IMR-90 (cell line): ENCODE measurements at regions of chr3 and their contacts with region 1.

Region 1: DNA sequence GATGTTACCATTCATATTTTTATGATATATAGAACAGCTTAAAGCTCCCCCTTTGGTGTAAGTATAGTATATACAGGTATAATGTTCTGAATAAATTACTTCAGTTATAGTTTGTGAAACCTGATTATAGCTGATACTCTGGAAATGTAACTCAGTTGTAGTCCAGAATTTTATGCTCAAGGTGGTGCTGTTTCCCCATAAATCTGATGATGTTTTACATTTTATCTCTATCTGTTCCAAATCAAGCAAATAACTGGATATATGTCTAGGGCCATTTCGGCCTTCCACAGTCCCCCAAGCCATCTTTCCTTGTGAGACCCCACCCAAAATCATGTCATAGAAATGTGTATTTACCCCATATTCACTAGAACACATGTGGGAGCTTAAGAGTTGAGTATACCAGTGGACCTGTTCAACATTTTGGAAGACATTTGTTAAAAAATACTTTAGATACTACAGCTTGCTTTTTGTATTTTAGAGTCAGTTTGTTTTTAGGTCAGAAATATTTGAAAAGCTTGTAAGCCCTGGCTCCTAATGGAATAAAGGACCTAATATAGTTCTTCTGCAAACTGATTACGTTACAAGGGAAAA is 107.1 kb downstream of the ATG7 start:
- DNase-seq: peak; percentile 70
- ATAC-seq: peak; percentile 86
- H3K4me3 ChIP-seq: no peak overlapping the region
- H3K27ac ChIP-seq: no peak overlapping the region
- H3K4me1 ChIP-seq: peaks cover 8% of the 10 kb centered on the region
- H3K27me3 ChIP-seq: no peaks in the 10 kb centered on the region
- CTCF ChIP-seq: peak; percentile 74
- POLR2A ChIP-seq: 0 out of 2 replicates have a peak, but pooled peaks have one; percentile 42
- RAD21 ChIP-seq: peak; percentile 83

Region 2: GRCh38 chr3:11548721-11549131 is 169.4 kb after region 1 on chr3:
- CTCF ChIA-PET with region 1: no interaction called
- POLR2A ChIA-PET with region 1: interaction called, 6 read pairs
- dilution Hi-C with region 1: no loop called
- in situ Hi-C with region 1: no loop called
- intact Hi-C with region 1: loop called (anchors 5 kb)
- DNase-seq: peak; percentile 73
- ATAC-seq: peak; percentile 57
- H3K4me3 ChIP-seq: no peak overlapping the region
- H3K27ac ChIP-seq: no peak overlapping the region
- H3K4me1 ChIP-seq: peaks cover 15% of the 10 kb centered on the region
- H3K27me3 ChIP-seq: no peaks in the 10 kb centered on the region
- CTCF ChIP-seq: no peak
- POLR2A ChIP-seq: no peak
- RAD21 ChIP-seq: no peak; the same call in 1 of the 2 replicates

Region 3: DNA sequence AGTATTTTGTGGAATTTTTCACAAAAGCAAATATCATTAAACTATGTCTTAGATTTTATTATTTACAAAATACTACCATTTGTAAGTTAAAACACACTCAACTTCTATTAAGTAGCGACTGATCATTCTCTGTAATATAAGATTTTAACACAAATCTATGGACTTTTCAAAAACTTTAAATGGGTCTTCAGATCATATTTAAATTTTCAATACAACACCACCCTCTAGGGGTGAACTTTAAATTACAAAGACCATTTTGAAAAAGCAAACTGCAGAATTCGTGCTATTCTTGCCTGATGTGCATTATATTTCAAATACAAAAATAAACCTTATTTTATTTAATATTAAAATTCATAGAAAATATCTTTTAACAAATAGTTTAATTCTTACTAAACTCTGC is 272.6 kb after region 1 on chr3:
- CTCF ChIA-PET with region 1: interaction called, 29 read pairs
- POLR2A ChIA-PET with region 1: interaction called, 3 read pairs
- dilution Hi-C with region 1: no loop called
- in situ Hi-C with region 1: loop called (anchors 5 kb)
- intact Hi-C with region 1: loop called (anchors 1 kb)
- DNase-seq: peak; percentile 63
- ATAC-seq: peak; percentile 70
- H3K4me3 ChIP-seq: no peak overlapping the region
- H3K27ac ChIP-seq: no peak overlapping the region; the same call in 1 of the 2 replicates
- H3K4me1 ChIP-seq: no peaks in the 10 kb centered on the region
- H3K27me3 ChIP-seq: no peaks in the 10 kb centered on the region
- CTCF ChIP-seq: peak; percentile 55
- POLR2A ChIP-seq: no peak
- RAD21 ChIP-seq: peak; percentile 58

Region 4: DNA sequence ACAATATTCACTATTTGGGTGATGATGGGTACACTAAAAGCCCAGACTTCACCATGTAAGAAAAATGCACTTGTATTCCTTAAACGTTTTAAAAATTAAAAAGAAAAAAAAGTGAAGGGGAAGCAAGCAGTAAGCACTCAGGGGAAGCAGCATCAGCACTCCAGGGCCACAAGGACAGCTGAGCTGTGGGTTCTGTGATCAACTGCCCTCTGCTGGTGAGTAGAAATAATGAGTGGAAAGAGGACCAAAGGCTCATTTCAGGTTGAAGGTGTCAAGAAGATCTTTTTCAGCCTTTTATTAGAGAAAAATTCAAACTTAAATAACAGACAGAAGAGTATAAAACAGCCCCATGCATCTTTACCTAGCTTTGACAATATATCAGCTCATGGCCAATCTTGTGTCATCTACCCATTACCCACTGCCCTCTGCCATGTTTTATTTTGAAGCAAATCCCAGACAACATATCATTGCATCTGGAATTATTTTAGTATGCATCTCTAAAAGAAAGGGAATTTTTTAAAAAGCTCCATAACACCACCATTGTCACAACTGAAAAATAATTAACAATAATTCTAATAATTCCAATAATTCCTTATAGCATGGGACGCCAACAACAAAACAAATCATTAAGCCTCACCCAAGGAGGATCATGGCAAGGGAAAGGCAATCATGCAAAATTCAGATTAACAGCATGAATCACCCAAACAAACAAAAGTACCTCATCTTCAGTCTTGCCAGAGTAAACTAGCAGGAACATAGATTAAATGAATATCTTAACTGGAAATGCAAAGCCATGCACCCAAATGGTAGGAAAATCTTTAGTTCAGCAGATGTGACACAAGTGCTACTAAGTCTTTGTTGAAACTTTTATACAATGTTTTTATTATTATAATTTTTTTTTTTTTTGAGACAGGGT is 424.9 kb after region 1 on chr3:
- CTCF ChIA-PET with region 1: interaction called, 7 read pairs
- POLR2A ChIA-PET with region 1: no interaction called
- dilution Hi-C with region 1: no loop called
- in situ Hi-C with region 1: loop called (anchors 10 kb)
- intact Hi-C with region 1: loop called (anchors 1 kb)
- DNase-seq: peak; percentile 55
- ATAC-seq: peak; percentile 82
- H3K4me3 ChIP-seq: no peak overlapping the region
- H3K27ac ChIP-seq: no peak overlapping the region
- H3K4me1 ChIP-seq: peaks cover 6% of the 10 kb centered on the region; the same call in 1 of the 2 replicates
- H3K27me3 ChIP-seq: no peaks in the 10 kb centered on the region
- CTCF ChIP-seq: peak; percentile 65
- POLR2A ChIP-seq: no peak
- RAD21 ChIP-seq: peak; percentile 67

Region 5: DNA sequence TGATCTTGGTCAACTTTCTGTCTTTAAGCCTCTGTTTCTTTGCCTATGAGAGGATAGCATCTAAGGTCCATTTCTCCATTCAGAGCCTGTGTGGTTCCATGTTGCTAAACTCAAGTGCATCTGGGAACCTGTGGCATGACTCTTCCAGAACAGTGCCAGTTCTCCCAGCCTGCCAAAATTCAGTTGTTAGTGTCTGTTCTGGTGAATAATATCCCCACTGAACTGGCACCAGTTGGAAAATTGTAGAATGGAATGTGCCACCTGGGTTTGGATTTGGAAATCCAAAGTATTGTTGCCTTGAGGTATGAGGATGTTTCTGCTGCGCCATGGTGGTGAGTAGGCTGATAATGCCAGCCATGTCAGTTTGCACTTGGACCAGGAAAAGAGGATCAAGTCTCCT is 748.1 kb after region 1 on chr3:
- CTCF ChIA-PET with region 1: no interaction called
- POLR2A ChIA-PET with region 1: no interaction called
- dilution Hi-C with region 1: no loop called
- in situ Hi-C with region 1: no loop called
- intact Hi-C with region 1: loop called (anchors 5 kb)
- DNase-seq: no peak
- ATAC-seq: no peak
- H3K4me3 ChIP-seq: no peak overlapping the region
- H3K27ac ChIP-seq: no peak overlapping the region
- H3K4me1 ChIP-seq: no peaks in the 10 kb centered on the region
- H3K27me3 ChIP-seq: peaks cover 37% of the 10 kb centered on the region
- CTCF ChIP-seq: no peak
- POLR2A ChIP-seq: no peak
- RAD21 ChIP-seq: no peak